A673 (cell line): ENCODE measurements at regions of chr11 and their contacts with region 1.

Region 1: GRCh38 chr11:65401073-65401802 is 14.8 kb downstream of the FRMD8 start:
- DNase-seq: no peak
- H3K4me3 ChIP-seq: no peak overlapping the region
- H3K27ac ChIP-seq: peak overlapping the region; percentile 50
- H3K4me1 ChIP-seq: no peaks in the 10 kb centered on the region
- H3K27me3 ChIP-seq: no peaks in the 10 kb centered on the region
- CTCF ChIP-seq: no peak

Region 2: DNA sequence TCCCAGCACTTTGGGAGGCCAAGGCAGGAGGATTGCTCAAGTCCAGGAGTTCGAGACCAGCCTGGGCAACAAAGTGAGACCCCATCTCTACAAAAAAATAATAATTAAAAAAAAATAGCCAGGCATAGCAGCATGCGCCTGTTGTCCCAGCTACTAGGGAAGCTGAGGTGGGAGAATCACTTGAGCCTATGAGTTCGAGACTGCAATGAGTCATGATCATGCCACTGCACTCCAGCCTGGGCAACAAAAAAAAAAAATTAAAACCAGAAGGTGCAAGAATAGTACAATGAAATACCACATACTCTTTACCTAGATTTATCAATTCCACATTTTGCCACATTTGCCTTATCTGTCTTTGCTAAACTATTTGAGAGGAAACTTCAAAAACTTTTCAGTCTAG is 59.4 kb before region 1 on chr11:
- CTCF ChIA-PET with region 1: no interaction called
- POLR2A ChIA-PET with region 1: interaction called, 18 read pairs
- intact Hi-C with region 1: no loop called
- DNase-seq: no peak
- H3K4me3 ChIP-seq: no peak overlapping the region
- H3K27ac ChIP-seq: no peak overlapping the region
- H3K4me1 ChIP-seq: no peaks in the 10 kb centered on the region
- H3K27me3 ChIP-seq: no peaks in the 10 kb centered on the region
- CTCF ChIP-seq: no peak

Region 3: GRCh38 chr11:65558002-65558931 is 157.0 kb after region 1 on chr11 and contains the start of gene LTBP3:
- CTCF ChIA-PET with region 1: no interaction called
- POLR2A ChIA-PET with region 1: no interaction called
- intact Hi-C with region 1: no loop called
- DNase-seq: peak; percentile 87
- H3K4me3 ChIP-seq: peak within 1 kb of the TSS; percentile 59
- H3K27ac ChIP-seq: peak within 1 kb of the TSS; percentile 87
- H3K4me1 ChIP-seq: peaks cover 41% of the 10 kb centered on the region
- H3K27me3 ChIP-seq: no peaks in the 10 kb centered on the region
- CTCF ChIP-seq: no peak
- total RNA-seq, gene LTBP3: 92.1 and 123 TPM in 2 replicates